ENCODE measurements at regions of chr11 and their contacts with region 1.

Region 1: GRCh38 chr11:82698576-82699352 is 34.9 kb downstream of the FAM181B start:
- DNase-seq: no peak
- H3K4me3 ChIP-seq: no peak overlapping the region
- H3K27ac ChIP-seq: no peak overlapping the region
- H3K4me1 ChIP-seq: no peaks in the 10 kb centered on the region
- CTCF ChIP-seq: no peak

Region 2: DNA sequence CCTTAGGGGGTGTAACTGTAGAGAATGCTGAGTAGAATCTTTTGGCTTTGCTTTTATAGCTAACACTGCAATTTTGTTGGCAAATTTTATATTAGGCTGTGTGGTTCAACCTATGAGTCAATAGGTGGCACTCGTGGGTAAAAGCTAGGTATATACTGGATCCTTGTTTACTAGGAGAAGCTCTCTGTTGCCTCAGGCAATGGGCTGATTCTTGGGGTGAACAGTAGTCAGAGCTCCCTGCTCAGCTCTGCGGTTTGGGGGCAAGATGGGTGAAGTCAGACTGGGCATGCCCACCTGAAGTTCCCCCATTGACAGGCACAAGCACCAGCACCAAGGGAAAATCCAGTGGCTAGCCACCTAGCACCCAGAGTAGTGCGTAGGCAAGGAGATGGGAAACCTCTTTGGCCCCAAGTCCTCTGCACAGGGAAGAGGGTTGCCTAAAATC is 203.8 kb before region 1 on chr11:
- CTCF ChIA-PET with region 1: no interaction called
- POLR2A ChIA-PET with region 1: no interaction called
- intact Hi-C with region 1: loop called (anchors 5 kb)
- DNase-seq: peak; percentile 29
- H3K4me3 ChIP-seq: no peak overlapping the region
- H3K27ac ChIP-seq: no peak overlapping the region
- H3K4me1 ChIP-seq: no peaks in the 10 kb centered on the region
- CTCF ChIP-seq: peak; percentile 71

Region 3: DNA sequence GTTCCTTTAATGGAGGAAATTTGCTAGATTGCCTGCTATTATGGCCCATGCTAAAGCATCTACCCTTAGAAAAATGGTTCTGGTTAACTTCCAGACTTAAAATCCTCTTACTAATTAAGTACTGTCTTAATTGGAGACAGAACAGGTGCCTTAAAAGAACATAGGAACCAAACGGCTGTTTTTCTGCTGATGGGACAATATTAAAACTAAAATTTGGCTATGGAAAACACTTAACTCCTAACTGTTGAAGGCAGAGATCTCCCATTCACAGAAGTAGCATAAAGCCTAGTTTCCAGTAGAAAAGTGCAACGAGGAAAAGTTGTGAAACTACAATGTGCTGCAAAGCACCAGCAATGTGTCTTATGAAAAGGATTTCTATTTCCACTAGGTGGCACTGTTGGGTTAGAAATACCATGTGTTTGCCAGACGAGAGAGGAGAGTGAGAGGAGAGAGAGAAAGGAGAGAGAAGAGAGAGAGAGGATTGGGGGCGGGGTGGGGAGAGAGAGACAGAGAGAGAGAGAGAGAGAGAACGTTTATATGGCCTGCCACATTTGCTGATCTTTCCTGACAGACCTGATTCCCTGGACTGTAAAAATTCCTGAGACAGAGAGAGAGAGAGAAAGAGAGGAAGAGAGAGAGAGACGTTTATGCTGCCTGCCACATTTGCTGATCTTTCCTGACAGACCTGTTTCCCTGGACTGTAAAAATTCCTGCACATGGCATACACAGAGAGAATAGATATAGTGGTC is 16.6 kb before region 1 on chr11:
- CTCF ChIA-PET with region 1: no interaction called
- POLR2A ChIA-PET with region 1: interaction called, 3 read pairs
- intact Hi-C with region 1: loop called (anchors 2 kb)
- DNase-seq: peak; percentile 72
- H3K4me3 ChIP-seq: no peak overlapping the region
- H3K27ac ChIP-seq: no peak overlapping the region
- H3K4me1 ChIP-seq: no peaks in the 10 kb centered on the region
- CTCF ChIP-seq: peak; percentile 86

Region 4: GRCh38 chr11:82722231-82722630 is 23.5 kb after region 1 on chr11:
- CTCF ChIA-PET with region 1: no interaction called
- POLR2A ChIA-PET with region 1: no interaction called
- intact Hi-C with region 1: no loop called
- DNase-seq: no peak
- H3K4me3 ChIP-seq: no peak overlapping the region
- H3K27ac ChIP-seq: no peak overlapping the region
- H3K4me1 ChIP-seq: no peaks in the 10 kb centered on the region
- CTCF ChIP-seq: no peak

Region 5: DNA sequence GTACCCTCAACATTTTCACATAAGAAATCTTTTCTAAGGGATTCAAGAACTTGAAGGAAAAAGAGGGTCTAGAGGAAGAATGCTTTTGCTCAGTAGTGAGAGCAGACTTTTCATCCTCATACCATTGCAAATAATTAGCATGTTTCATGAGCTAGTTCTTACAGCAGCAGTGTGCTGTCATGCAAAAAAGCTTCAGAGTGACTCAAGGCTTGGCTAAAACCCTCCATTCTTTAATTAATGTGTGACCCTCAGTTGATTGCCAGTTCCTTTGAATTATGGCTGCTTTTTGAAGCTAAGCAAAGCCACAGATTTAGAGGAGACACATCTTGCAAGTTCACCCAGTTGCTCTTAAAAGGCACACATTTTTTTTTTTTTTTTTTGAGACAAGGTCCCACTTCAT is 421.6 kb after region 1 on chr11:
- CTCF ChIA-PET with region 1: no interaction called
- POLR2A ChIA-PET with region 1: no interaction called
- intact Hi-C with region 1: no loop called
- DNase-seq: no peak
- H3K4me3 ChIP-seq: no peak overlapping the region
- H3K27ac ChIP-seq: no peak overlapping the region
- H3K4me1 ChIP-seq: peaks cover 40% of the 10 kb centered on the region
- CTCF ChIP-seq: no peak

Measured in OCI-LY7 (cell line).